T-cell (primary cell): ENCODE measurements at regions of chr3 and their contacts with region 1.

Region 1: GRCh38 chr3:22334996-22335395 is 584.0 kb upstream of the ZNF385D start:
- DNase-seq: no peak
- ATAC-seq: no peak
- H3K4me3 ChIP-seq: no peak overlapping the region
- H3K4me3 Mint-ChIP-seq: no peak overlapping the region
- H3K27ac ChIP-seq: no peak overlapping the region
- H3K27ac Mint-ChIP-seq: no peak overlapping the region
- H3K4me1 ChIP-seq: no peaks in the 10 kb centered on the region
- H3K4me1 Mint-ChIP-seq: no peaks in the 10 kb centered on the region
- H3K27me3 ChIP-seq: no peaks in the 10 kb centered on the region
- H3K27me3 Mint-ChIP-seq: no peaks in the 10 kb centered on the region

Region 2: GRCh38 chr3:22318325-22318724 is 16.7 kb before region 1 on chr3:
- CTCF ChIA-PET with region 1: interaction called in 1 of 2 experiments, 10 read pairs
- POLR2A ChIA-PET with region 1: no interaction called
- DNase-seq: no peak
- ATAC-seq: no peak
- H3K4me3 ChIP-seq: no peak overlapping the region
- H3K4me3 Mint-ChIP-seq: no peak overlapping the region
- H3K27ac ChIP-seq: no peak overlapping the region
- H3K27ac Mint-ChIP-seq: no peak overlapping the region
- H3K4me1 ChIP-seq: no peaks in the 10 kb centered on the region
- H3K4me1 Mint-ChIP-seq: no peaks in the 10 kb centered on the region
- H3K27me3 ChIP-seq: no peaks in the 10 kb centered on the region
- H3K27me3 Mint-ChIP-seq: no peaks in the 10 kb centered on the region